GM10248 (cell line): ENCODE measurements at regions of chr17 and their contacts with region 1.

Region 1: GRCh38 chr17:48492401-48493298 is 38.2 kb downstream of the HOXB1 start:
- DNase-seq: peak; percentile 83
- CTCF ChIP-seq: peak; percentile 90

Region 2: DNA sequence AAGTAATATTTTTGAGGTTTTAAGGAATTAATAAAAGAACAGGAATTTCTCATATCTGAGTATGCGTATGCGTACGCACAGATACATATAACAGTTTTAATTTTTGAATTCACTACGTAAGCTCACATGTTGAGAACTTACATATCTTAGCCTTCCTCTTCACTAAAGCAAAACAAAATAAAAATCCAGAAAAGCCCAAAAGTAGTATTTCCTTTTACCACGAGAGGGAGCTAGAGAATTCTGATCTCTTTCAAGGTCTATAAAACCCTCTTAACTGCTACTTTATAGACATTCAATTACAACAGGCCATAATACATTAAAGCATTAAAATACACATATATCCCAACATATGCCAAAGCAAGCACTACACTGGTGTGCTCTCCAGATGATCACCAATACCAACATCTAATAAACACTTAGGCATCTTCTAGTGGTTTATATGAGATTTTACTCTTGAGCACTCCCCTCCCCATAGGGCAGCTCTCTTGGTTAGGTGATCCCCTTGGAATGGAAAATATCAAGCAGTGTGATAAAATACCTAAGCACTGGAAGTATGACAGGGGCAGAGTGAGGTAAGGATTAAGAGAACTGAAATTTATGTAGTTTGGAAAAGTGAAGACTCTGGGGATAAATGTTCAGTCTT is 156.7 kb before region 1 on chr17:
- CTCF ChIA-PET with region 1: interaction called, 14 read pairs
- POLR2A ChIA-PET with region 1: no interaction called
- DNase-seq: peak; percentile 37
- CTCF ChIP-seq: peak; percentile 43

Region 3: GRCh38 chr17:48472411-48473281 is 20.0 kb before region 1 on chr17:
- CTCF ChIA-PET with region 1: interaction called, 12 read pairs
- POLR2A ChIA-PET with region 1: no interaction called
- DNase-seq: no peak
- CTCF ChIP-seq: no peak

Region 4: DNA sequence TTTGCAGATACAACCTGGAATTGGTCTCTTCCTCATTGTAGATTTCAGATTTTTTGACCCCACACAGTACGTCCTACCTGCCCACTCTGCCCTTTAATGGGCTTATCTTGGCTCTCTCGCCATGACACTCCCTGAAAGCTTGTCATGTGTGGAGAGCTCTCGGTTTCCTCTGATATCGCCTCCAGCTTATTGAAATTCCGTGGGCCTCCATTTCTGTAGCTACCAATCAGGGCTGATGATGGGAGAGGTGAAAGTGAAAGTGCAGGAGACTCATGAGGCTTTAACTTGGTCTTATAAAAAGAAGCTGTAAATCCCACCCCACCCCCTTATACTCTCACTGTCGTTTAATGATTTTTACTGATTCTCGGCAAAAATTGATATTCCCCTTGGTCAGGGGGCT is 20.4 kb after region 1 on chr17:
- CTCF ChIA-PET with region 1: interaction called, 16 read pairs
- POLR2A ChIA-PET with region 1: interaction called, 3 read pairs
- DNase-seq: peak; percentile 31
- CTCF ChIP-seq: no peak

Region 5: GRCh38 chr17:48547808-48548522 is 55.3 kb after region 1 on chr17:
- CTCF ChIA-PET with region 1: interaction called, 11 read pairs
- POLR2A ChIA-PET with region 1: no interaction called
- DNase-seq: no peak
- CTCF ChIP-seq: no peak